Endothelial cell of umbilical vein (primary cell): ENCODE measurements at regions of chr6 and their contacts with region 1.

Region 1: DNA sequence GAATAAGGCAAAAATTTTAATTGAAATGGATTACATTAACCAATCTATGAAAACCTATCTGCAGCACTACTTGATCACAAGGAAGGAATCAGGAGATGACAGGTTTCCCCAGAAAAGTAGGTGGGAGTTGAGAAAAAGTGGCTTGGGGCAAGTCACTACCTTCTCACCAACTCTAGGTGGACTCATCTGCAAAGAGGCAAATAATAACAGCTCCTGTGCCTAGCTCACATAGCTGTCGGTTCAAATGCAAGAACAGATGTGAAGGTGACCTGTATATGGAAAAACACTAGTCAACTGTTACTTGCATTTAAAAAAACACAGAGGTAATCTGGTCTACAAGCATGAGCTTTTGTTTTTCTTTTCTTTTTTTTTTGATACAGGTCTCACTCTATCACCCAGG is 67.2 kb downstream of the POPDC3 start:
- DNase-seq: no peak
- H3K4me3 ChIP-seq: no peak overlapping the region
- H3K27ac ChIP-seq: no peak overlapping the region
- H3K4me1 ChIP-seq: no peaks in the 10 kb centered on the region
- H3K27me3 ChIP-seq: no peaks in the 10 kb centered on the region
- CTCF ChIP-seq: no peak
- POLR2A ChIP-seq: no peak

Region 2: DNA sequence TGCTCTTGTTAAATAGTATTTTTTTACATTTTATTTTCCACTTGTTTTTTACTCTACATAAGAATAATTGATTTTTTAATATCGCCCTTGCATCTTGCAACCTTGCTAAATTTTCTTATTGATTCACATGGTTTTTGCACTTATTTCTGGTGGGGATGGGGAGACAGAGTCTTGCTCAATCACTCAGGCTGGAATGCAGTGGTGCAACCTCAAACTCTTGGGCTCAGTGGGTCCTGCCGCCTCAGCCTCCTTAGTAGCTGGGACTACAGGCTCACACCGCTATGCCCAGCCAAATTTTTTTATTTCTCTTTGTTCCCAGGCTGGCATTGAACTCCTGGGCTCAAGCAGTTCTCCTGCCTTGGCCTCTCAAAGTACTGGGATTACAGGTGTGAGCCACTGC is 125.4 kb before region 1 on chr6:
- CTCF ChIA-PET with region 1: no interaction called
- POLR2A ChIA-PET with region 1: no interaction called
- dilution Hi-C with region 1: no loop called
- intact Hi-C with region 1: no loop called
- DNase-seq: no peak
- H3K4me3 ChIP-seq: no peak overlapping the region
- H3K27ac ChIP-seq: no peak overlapping the region
- H3K4me1 ChIP-seq: no peaks in the 10 kb centered on the region
- H3K27me3 ChIP-seq: no peaks in the 10 kb centered on the region
- CTCF ChIP-seq: no peak
- POLR2A ChIP-seq: no peak

Region 3: DNA sequence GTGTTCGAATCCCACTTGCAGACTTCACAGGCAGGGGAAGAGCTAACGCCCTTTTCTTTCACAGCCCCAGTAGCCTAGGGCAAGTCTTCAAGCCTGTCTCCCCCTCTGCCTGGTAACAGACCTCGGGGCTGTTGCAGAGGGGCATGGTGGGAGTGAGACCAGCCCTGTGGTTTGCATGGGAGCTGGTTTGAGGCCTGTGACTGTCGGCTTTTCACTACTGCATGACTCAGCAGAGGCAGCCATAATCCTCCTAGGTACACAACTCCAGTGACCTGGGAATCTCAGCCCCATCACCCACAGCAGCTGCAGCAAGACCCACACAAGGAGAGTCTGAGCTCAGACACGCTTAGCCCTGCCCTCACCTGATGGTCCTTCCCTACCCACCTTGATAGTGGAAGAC is 122.6 kb after region 1 on chr6:
- CTCF ChIA-PET with region 1: no interaction called
- POLR2A ChIA-PET with region 1: no interaction called
- dilution Hi-C with region 1: no loop called
- intact Hi-C with region 1: no loop called
- DNase-seq: no peak
- H3K4me3 ChIP-seq: no peak overlapping the region
- H3K27ac ChIP-seq: no peak overlapping the region
- H3K4me1 ChIP-seq: no peaks in the 10 kb centered on the region
- H3K27me3 ChIP-seq: peaks cover 0 to 2% of the 10 kb centered on the region in 2 experiments
- CTCF ChIP-seq: no peak
- POLR2A ChIP-seq: no peak

Region 4: GRCh38 chr6:105263685-105264610 is 151.4 kb after region 1 on chr6:
- CTCF ChIA-PET with region 1: no interaction called
- POLR2A ChIA-PET with region 1: no interaction called
- dilution Hi-C with region 1: no loop called
- intact Hi-C with region 1: loop called (anchors 10 kb)
- DNase-seq: no peak
- H3K4me3 ChIP-seq: no peak overlapping the region
- H3K27ac ChIP-seq: no peak overlapping the region
- H3K4me1 ChIP-seq: no peaks in the 10 kb centered on the region
- H3K27me3 ChIP-seq: no peaks in the 10 kb centered on the region
- CTCF ChIP-seq: no peak
- POLR2A ChIP-seq: no peak

Region 5: DNA sequence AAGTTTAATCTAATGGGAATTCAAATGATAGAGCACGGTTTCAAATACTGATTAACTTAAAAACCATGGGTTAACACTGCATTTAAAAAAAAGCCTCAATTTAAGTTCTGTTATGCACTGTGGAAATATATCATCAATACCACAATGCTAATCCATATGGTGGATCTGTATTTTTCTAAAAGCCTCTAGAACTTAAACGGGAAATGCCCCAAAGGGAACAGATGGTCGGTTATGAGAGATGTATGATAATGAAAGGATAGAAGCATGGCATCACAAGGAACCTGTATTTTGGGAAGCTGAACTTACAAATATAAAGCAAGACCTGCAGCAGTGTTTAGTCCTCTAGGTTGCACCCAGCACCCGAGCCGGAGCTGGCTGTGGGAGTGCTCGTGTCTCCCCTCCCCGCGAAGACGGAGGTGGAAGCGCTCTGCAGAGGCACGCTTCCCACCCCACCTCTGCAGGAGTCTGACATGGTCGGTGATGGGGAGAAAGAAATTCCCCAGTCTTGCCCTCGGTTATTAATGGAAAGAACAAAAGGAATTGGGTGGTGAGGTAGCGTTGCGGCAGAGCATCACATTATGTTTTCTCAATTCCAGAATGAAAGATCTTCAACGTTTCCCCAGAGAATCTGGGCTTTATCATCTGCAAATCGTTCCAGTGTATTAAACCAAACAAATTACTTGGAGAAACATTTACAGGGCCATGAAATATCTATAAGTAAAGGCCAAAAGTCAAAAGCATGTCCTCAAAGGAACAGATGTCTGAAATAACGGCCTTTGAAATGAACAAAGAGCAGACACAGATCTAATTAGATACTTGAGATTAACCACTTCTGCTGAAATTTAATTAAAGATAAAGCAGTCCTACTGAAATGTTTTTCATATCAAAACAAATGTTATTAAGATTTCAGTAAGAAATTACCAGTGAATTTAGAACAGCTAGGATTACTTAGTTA is 170.3 kb after region 1 on chr6:
- CTCF ChIA-PET with region 1: no interaction called
- POLR2A ChIA-PET with region 1: no interaction called
- dilution Hi-C with region 1: loop called (anchors 25 kb)
- intact Hi-C with region 1: no loop called
- DNase-seq: no peak
- H3K4me3 ChIP-seq: no peak overlapping the region
- H3K27ac ChIP-seq: no peak overlapping the region
- H3K4me1 ChIP-seq: no peaks in the 10 kb centered on the region
- H3K27me3 ChIP-seq: no peaks in the 10 kb centered on the region
- CTCF ChIP-seq: no peak
- POLR2A ChIP-seq: no peak

Region 6: GRCh38 chr6:106844930-106845329 is 1732.4 kb after region 1 on chr6:
- CTCF ChIA-PET with region 1: no interaction called
- POLR2A ChIA-PET with region 1: no interaction called
- dilution Hi-C with region 1: no loop called
- intact Hi-C with region 1: no loop called
- DNase-seq: no peak
- H3K4me3 ChIP-seq: no peak overlapping the region
- H3K27ac ChIP-seq: no peak overlapping the region
- H3K4me1 ChIP-seq: no peaks in the 10 kb centered on the region
- H3K27me3 ChIP-seq: no peaks in the 10 kb centered on the region
- CTCF ChIP-seq: no peak
- POLR2A ChIP-seq: no peak